PC-9 (cell line): ENCODE measurements at regions of chr4 and their contacts with region 1.

Region 1: DNA sequence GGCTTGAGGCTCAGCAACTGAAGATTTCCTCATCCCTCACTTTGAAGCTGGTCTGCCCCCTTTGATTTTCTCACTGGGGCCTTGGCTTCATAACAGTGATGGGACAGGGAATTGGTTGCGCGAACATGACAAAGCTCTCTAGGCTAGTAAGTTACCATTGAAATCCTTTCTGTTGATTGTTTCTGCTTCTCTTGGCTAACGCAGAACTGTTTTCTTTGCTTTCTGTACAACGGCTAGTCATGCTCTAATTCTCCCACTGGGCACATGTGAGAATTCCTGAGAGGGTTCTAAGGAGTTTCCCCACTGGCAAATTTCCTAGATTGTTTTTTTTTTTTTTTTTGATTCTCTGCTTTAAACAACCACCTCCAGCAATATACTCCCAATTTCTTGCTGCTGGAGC is 738.6 kb downstream of the PCDH7 start:
- DNase-seq: no peak
- H3K4me3 ChIP-seq: no peak overlapping the region
- H3K27ac ChIP-seq: no peak overlapping the region
- H3K4me1 ChIP-seq: no peaks in the 10 kb centered on the region
- H3K27me3 ChIP-seq: no peaks in the 10 kb centered on the region
- CTCF ChIP-seq: no peak

Region 2: GRCh38 chr4:31417040-31417439 is 41.8 kb before region 1 on chr4:
- CTCF ChIA-PET with region 1: no interaction called
- POLR2A ChIA-PET with region 1: no interaction called
- intact Hi-C with region 1: no loop called
- DNase-seq: no peak
- H3K4me3 ChIP-seq: no peak overlapping the region
- H3K27ac ChIP-seq: no peak overlapping the region
- H3K4me1 ChIP-seq: no peaks in the 10 kb centered on the region
- H3K27me3 ChIP-seq: no peaks in the 10 kb centered on the region
- CTCF ChIP-seq: no peak

Region 3: DNA sequence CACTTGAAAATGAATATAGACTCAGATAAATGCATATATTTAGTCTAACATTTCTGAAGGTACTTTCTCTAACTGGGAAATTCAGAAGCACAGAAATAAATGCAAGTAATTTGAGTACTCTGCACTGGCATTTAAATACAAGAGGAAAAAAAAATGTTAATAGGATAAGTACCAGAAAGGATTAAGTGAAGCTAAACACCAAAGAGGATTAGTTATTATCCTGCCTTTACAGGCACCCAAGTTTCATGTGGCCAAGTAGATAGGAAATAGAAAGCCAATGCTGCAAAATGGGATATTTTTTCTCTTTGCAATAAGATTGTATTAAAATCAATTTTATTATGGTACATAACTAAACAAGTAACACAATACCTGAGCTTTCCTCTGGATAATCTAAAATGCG is 23.9 kb after region 1 on chr4:
- CTCF ChIA-PET with region 1: no interaction called
- POLR2A ChIA-PET with region 1: interaction called, 15 read pairs
- intact Hi-C with region 1: no loop called
- DNase-seq: no peak
- H3K4me3 ChIP-seq: no peak overlapping the region
- H3K27ac ChIP-seq: no peak overlapping the region
- H3K4me1 ChIP-seq: no peaks in the 10 kb centered on the region
- H3K27me3 ChIP-seq: no peaks in the 10 kb centered on the region
- CTCF ChIP-seq: no peak